Activated CD4-positive, alpha-beta T cell treated with anti-CD3 and anti-CD28 coated beads for 36 hours (primary cell): ENCODE measurements at regions of chr17 and their contacts with region 1.

Region 1: GRCh38 chr17:21476867-21477266 is 100.7 kb downstream of the KCNJ12 start:
- DNase-seq: no peak
- ATAC-seq: no peak
- H3K4me3 Mint-ChIP-seq: no peak overlapping the region
- H3K27ac Mint-ChIP-seq: no peak overlapping the region
- H3K4me1 Mint-ChIP-seq: no peaks in the 10 kb centered on the region
- H3K27me3 Mint-ChIP-seq: peaks cover 14% of the 10 kb centered on the region

Region 2: DNA sequence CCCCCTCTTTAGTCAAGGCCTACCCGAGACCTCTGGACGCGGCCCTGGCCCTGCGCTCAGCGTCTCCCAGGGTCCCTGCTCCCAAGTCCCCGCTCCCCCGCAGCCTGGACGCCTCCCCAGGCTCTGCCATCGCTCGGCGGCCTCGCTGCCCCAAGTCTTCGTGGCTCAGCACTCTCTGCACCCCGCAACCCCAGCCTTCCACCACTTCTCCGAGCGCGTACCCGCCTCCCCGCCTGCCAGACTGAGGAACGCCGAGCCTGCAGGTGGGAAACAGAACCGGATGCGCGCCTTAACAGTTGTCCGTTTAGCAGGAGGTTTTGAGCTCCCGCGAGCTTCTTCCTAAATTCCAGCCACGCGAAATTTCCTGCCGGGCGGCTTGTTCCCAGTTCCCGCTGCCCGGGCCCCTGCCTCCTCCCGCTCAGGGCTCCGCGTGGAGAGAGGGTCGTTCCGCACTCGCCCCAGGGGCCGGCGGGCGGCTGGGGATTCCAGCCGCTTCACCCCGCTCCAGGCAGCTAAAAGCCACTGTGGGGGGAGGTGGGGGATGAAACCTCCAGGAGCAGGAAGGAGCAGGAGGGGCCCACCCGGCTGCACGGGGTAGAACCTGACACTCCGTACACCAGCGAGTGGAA is 13.0 kb before region 1 on chr17:
- CTCF ChIA-PET with region 1: no interaction called
- POLR2A ChIA-PET with region 1: no interaction called
- intact Hi-C with region 1: loop called in 1 of 2 experiments (anchors 1 kb)
- DNase-seq: no peak
- ATAC-seq: no peak
- H3K4me3 Mint-ChIP-seq: no peak overlapping the region
- H3K27ac Mint-ChIP-seq: peak overlapping the region; percentile 24
- H3K4me1 Mint-ChIP-seq: peaks cover 13% of the 10 kb centered on the region
- H3K27me3 Mint-ChIP-seq: peaks cover 10% of the 10 kb centered on the region

Region 3: DNA sequence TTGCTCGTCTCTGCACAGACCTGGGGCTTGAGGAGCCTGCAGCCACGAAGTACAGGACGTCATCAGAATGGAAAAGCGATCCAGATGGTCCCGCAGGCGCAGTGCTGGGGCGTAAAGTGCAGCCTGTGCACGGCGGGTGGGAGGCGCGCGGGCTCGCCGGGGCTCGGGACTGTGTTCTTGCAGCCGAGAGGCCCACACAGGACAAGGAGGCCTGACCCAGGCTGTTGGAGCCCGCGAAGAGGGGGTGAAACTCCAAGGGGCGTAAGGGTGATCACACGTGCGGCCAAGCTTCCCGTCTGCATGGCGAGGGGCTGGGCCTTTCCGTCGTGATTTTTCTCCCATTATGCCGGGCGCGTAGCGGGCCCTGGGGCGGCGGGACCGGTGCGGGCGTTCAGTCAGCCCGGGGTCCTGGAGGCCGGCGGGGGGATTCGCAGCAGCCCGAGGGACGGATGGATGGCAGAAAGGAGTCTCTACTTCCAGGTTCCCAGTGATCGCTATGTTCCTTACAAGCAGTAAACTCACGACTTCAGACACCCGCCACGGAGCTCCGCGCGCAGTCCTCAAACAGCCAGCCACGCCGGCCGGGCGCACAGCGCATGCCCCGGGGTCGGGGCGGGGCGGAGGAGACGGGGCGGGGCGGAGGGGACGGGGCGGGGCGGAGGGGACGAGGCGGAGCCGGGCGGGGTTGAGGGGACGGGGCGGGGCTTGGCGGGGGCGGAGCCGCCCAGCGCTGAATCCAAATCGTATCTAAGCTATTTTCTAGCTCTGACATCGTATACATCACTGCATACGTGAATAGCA is 74.4 kb after region 1 on chr17:
- CTCF ChIA-PET with region 1: no interaction called
- POLR2A ChIA-PET with region 1: no interaction called
- intact Hi-C with region 1: no loop called
- DNase-seq: peak; percentile 91
- ATAC-seq: peak; percentile 84
- H3K4me3 Mint-ChIP-seq: peak overlapping the region; percentile 72
- H3K27ac Mint-ChIP-seq: peak overlapping the region; percentile 85
- H3K4me1 Mint-ChIP-seq: peaks cover 30% of the 10 kb centered on the region
- H3K27me3 Mint-ChIP-seq: peaks cover 4% of the 10 kb centered on the region